Activated CD4-positive, alpha-beta memory T cell treated with anti-CD3 and anti-CD28 coated beads for 36 hours (primary cell): ENCODE measurements at regions of chrX and their contacts with region 1.

Region 1: GRCh38 chrX:13569479-13570260 is at the start of gene EGFL6:
- DNase-seq: no peak
- H3K4me3 Mint-ChIP-seq: peak within 1 kb of the TSS; percentile 26
- H3K27ac Mint-ChIP-seq: no peak within 1 kb of the TSS
- H3K4me1 Mint-ChIP-seq: peaks cover 18% of the 10 kb centered on the region
- H3K27me3 Mint-ChIP-seq: peaks cover 24% of the 10 kb centered on the region
- total RNA-seq, gene EGFL6: 0.58 to 0.64 TPM

Region 2: GRCh38 chrX:13550346-13550745 is 19.3 kb before region 1 on chrX:
- CTCF ChIA-PET with region 1: no interaction called
- POLR2A ChIA-PET with region 1: no interaction called
- intact Hi-C with region 1: loop called (anchors 2 kb)
- DNase-seq: no peak
- H3K4me3 Mint-ChIP-seq: no peak overlapping the region
- H3K27ac Mint-ChIP-seq: no peak overlapping the region
- H3K4me1 Mint-ChIP-seq: peaks cover 12% of the 10 kb centered on the region
- H3K27me3 Mint-ChIP-seq: peaks cover 8% of the 10 kb centered on the region